ENCODE measurements at regions of chrX and their contacts with region 1.

Region 1: GRCh38 chrX:47233337-47234113 is 716 bp downstream of the USP11 start:
- DNase-seq: peak; percentile 96
- H3K4me3 Mint-ChIP-seq: peak overlapping the region; percentile 85
- H3K27ac Mint-ChIP-seq: peak overlapping the region; percentile 92
- H3K4me1 Mint-ChIP-seq: peaks cover 20% of the 10 kb centered on the region
- H3K27me3 Mint-ChIP-seq: no peaks in the 10 kb centered on the region

Region 2: DNA sequence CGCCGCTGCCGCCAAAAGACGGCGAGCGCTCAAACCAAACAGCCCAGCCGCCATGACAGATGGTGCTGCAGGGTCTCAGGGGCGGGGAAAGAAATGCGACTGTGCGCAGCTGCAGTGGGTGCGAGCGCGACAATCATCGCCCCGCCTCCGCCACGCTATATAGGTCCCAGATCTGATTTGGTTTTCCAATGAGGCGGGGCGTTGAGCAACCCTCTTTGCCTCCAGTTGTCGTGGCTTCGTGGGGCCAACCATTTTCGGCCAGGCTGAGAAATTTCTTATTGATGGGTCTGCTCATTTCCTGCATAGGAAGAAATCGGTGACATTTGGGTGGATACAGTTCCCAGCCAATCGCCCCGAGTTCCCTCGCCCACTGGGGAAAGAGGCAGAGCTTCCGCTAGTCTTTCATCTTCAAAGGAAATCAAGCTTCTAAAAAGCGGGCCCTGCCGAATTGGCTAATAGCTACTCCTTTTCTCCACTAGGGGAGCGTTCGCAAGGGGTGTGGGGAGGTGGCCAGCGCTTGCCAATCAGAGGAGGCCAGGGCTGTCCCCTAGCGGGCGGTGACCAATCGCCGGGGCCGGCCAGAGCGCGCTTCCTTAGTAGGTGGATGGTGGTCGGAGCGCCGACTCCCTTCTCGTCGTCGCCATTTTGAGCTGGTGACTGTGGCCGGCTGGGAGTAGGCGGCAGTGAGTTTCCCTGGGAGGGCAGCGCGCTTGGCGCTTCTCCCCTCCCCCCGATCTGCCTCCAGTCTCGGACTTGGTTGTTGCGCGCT is 88.7 kb before region 1 on chrX and contains the starts of genes NDUFB11 and RBM10:
- CTCF ChIA-PET with region 1: no interaction called
- intact Hi-C with region 1: loop called (anchors 1 kb)
- DNase-seq: peak; percentile 94
- H3K4me3 Mint-ChIP-seq: peak within 1 kb of the TSS; percentile 97
- H3K27ac Mint-ChIP-seq: peak within 1 kb of the TSS; percentile 99
- H3K4me1 Mint-ChIP-seq: peaks cover 35% of the 10 kb centered on the region
- H3K27me3 Mint-ChIP-seq: no peaks in the 10 kb centered on the region
- total RNA-seq, gene NDUFB11: 85.8 to 87.2 TPM
- total RNA-seq, gene RBM10: 65.4 to 65.5 TPM

Region 3: GRCh38 chrX:47247206-47247998 is 13.9 kb after region 1 on chrX:
- CTCF ChIA-PET with region 1: no interaction called
- intact Hi-C with region 1: loop called (anchors 1 kb)
- DNase-seq: no peak
- H3K4me3 Mint-ChIP-seq: no peak overlapping the region
- H3K27ac Mint-ChIP-seq: peak overlapping the region; percentile 24
- H3K4me1 Mint-ChIP-seq: peaks cover 8% of the 10 kb centered on the region
- H3K27me3 Mint-ChIP-seq: no peaks in the 10 kb centered on the region

Region 4: GRCh38 chrX:47384502-47384901 is 151.0 kb after region 1 on chrX:
- CTCF ChIA-PET with region 1: no interaction called
- intact Hi-C with region 1: loop called (anchors 5 kb)
- DNase-seq: peak; percentile 79
- H3K4me3 Mint-ChIP-seq: no peak overlapping the region
- H3K27ac Mint-ChIP-seq: no peak overlapping the region
- H3K4me1 Mint-ChIP-seq: peaks cover 25% of the 10 kb centered on the region
- H3K27me3 Mint-ChIP-seq: no peaks in the 10 kb centered on the region

Region 5: GRCh38 chrX:47446431-47446830 is 212.9 kb after region 1 on chrX:
- CTCF ChIA-PET with region 1: no interaction called
- intact Hi-C with region 1: no loop called
- DNase-seq: no peak
- H3K4me3 Mint-ChIP-seq: no peak overlapping the region
- H3K27ac Mint-ChIP-seq: no peak overlapping the region
- H3K4me1 Mint-ChIP-seq: no peaks in the 10 kb centered on the region
- H3K27me3 Mint-ChIP-seq: no peaks in the 10 kb centered on the region

Region 6: GRCh38 chrX:47595716-47596251 is 362.3 kb after region 1 on chrX:
- CTCF ChIA-PET with region 1: no interaction called
- intact Hi-C with region 1: no loop called
- DNase-seq: no peak
- H3K4me3 Mint-ChIP-seq: no peak overlapping the region
- H3K27ac Mint-ChIP-seq: peak overlapping the region; percentile 73
- H3K4me1 Mint-ChIP-seq: peaks cover 13% of the 10 kb centered on the region
- H3K27me3 Mint-ChIP-seq: no peaks in the 10 kb centered on the region

Region 7: GRCh38 chrX:47658684-47659515 is 425.4 kb after region 1 on chrX and contains the start of gene UXT:
- CTCF ChIA-PET with region 1: no interaction called
- intact Hi-C with region 1: loop called (anchors 2 kb)
- DNase-seq: peak; percentile 96
- H3K4me3 Mint-ChIP-seq: peak within 1 kb of the TSS; percentile 88
- H3K27ac Mint-ChIP-seq: peak within 1 kb of the TSS; percentile 98
- H3K4me1 Mint-ChIP-seq: peaks cover 46% of the 10 kb centered on the region
- H3K27me3 Mint-ChIP-seq: no peaks in the 10 kb centered on the region
- total RNA-seq, gene UXT: 192 to 198 TPM